ENCODE measurements at regions of chr3 and their contacts with region 1.

Region 1: DNA sequence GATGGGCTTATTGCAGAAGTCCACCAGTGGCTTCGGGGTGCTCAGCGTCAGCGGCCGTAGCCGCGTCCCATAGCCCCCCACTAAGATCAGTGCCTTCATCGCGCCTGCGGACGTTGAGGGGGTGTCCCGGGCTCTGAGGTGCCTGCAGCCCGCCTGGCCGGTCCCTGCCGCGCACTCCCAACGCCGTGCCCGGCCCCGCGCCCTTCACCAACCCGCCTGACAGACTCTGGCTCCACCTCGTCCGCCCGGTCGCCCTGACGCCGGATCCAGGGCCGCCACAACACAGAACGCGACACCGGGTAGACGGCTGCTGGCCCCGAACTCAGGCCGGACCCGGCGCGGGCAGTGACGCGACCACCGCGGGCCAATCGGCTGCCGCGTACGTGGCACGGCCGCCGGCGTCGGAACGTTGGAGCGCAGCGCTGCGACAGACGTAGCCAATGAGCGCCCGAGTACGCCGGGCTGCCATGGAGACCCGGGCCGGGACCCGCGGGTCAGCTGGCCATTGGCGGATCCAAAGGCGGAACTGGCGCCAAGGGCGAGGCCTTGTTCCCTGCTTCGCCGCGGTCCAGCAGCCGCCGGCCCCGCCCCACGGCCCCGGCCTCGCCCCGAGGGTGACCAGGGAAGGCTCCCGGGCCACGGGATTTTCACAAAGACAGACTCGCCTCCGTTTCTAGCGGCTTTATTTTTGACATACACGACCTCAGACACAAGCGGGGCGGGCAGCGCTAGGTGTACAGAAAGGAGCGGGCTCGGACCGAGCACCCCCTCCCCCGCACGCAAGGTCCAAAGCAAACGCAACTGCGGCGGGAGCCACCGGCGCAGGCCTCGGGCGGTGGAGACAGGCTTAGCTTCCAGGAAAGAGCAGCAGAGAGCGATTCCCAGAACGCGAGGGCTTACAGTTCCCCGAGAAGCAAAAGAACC is at the start of gene GMPPB:
- DNase-seq: peak; percentile 95
- H3K4me3 Mint-ChIP-seq: peak within 1 kb of the TSS; percentile 95
- H3K27ac Mint-ChIP-seq: peak within 1 kb of the TSS; percentile 95
- H3K4me1 Mint-ChIP-seq: peaks cover 34% of the 10 kb centered on the region
- H3K27me3 Mint-ChIP-seq: no peaks in the 10 kb centered on the region
- total RNA-seq, gene GMPPB: 49.1 and 49.2 TPM in 2 replicates

Region 2: GRCh38 chr3:49689046-49689907 is 34.6 kb before region 1 on chr3 and contains the starts of genes MST1 and RNF123:
- intact Hi-C with region 1: loop called (anchors 1 kb)
- DNase-seq: peak; percentile 91
- H3K4me3 Mint-ChIP-seq: peak within 1 kb of the TSS; percentile 97
- H3K27ac Mint-ChIP-seq: peak within 1 kb of the TSS; percentile 91
- H3K4me1 Mint-ChIP-seq: peaks cover 21% of the 10 kb centered on the region
- H3K27me3 Mint-ChIP-seq: peaks cover 2% of the 10 kb centered on the region
- total RNA-seq, gene MST1: 6.5 and 8.2 TPM in 2 replicates
- total RNA-seq, gene RNF123: 53.8 and 54.3 TPM in 2 replicates

Region 3: GRCh38 chr3:49703443-49703927 is 20.4 kb before region 1 on chr3:
- intact Hi-C with region 1: loop called (anchors 1 kb)
- DNase-seq: peak; percentile 57
- H3K4me3 Mint-ChIP-seq: no peak overlapping the region
- H3K27ac Mint-ChIP-seq: no peak overlapping the region
- H3K4me1 Mint-ChIP-seq: no peaks in the 10 kb centered on the region
- H3K27me3 Mint-ChIP-seq: no peaks in the 10 kb centered on the region

Region 4: DNA sequence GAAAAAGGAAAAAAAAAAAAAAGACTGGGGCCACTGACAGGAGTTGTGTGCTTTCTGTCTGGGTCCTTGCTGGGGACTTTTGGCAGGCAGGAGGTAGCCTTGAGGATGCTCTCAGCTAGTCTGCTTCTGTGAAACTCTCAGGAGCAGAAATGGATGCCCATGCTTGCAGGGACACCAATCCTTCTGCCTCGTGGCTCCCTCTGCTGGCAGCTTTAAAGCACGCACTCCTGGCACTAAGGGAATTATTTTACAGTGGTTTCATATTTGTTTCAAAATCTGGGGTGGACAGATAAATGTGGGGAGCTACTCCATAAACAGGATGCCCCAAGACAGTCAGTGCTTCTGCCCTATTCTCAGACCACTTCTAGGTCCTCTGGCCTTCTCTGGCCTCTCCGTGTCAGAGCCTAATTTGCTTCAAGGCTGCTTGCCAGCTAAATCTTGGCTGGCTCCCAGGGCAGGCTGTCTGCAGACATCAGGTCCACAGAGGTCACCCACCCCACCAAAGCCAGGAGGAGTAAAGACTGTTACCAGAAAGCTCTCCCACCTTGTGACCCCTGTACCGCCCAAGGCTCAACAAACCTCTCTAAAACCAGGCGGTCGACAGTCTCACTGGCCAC is 115.4 kb after region 1 on chr3:
- intact Hi-C with region 1: loop called (anchors 5 kb)
- DNase-seq: peak; percentile 69
- H3K4me3 Mint-ChIP-seq: no peak overlapping the region
- H3K27ac Mint-ChIP-seq: no peak overlapping the region
- H3K4me1 Mint-ChIP-seq: no peaks in the 10 kb centered on the region
- H3K27me3 Mint-ChIP-seq: no peaks in the 10 kb centered on the region

Region 5: GRCh38 chr3:50235716-50236496 is 512.0 kb after region 1 on chr3 and contains the start of gene GNAI2:
- intact Hi-C with region 1: loop called (anchors 5 kb)
- DNase-seq: peak; percentile 99
- H3K4me3 Mint-ChIP-seq: peak within 1 kb of the TSS; percentile 99
- H3K27ac Mint-ChIP-seq: peak within 1 kb of the TSS; percentile 94
- H3K4me1 Mint-ChIP-seq: peaks cover 32% of the 10 kb centered on the region
- H3K27me3 Mint-ChIP-seq: no peaks in the 10 kb centered on the region
- total RNA-seq, gene GNAI2: 237 and 238 TPM in 2 replicates